K562 (cell line): ENCODE measurements at regions of chrX and their contacts with region 1.

Region 1: GRCh38 chrX:48972220-48973167 is 850 bp upstream of the KCND1 start:
- DNase-seq: peak; percentile 67 to 77 (median 74)
- ATAC-seq: peak; percentile 88
- H3K4me3 ChIP-seq: peak overlapping the region; percentile 7
- H3K27ac ChIP-seq: no peak overlapping the region; the same call in 2 of the 3 replicates
- H3K4me1 ChIP-seq: peaks cover 11 to 27% of the 10 kb centered on the region in 2 experiments; a peak in 4 of 5 replicates
- H3K27me3 ChIP-seq: no peaks in the 10 kb centered on the region
- CTCF ChIP-seq: peak; percentile 52 to 84 (median 59)
- EP300 ChIP-seq: no peak
- POLR2A ChIP-seq: no peak
- RAD21 ChIP-seq: peak; percentile 15 to 50; a peak in 2 of 4 replicates

Region 2: DNA sequence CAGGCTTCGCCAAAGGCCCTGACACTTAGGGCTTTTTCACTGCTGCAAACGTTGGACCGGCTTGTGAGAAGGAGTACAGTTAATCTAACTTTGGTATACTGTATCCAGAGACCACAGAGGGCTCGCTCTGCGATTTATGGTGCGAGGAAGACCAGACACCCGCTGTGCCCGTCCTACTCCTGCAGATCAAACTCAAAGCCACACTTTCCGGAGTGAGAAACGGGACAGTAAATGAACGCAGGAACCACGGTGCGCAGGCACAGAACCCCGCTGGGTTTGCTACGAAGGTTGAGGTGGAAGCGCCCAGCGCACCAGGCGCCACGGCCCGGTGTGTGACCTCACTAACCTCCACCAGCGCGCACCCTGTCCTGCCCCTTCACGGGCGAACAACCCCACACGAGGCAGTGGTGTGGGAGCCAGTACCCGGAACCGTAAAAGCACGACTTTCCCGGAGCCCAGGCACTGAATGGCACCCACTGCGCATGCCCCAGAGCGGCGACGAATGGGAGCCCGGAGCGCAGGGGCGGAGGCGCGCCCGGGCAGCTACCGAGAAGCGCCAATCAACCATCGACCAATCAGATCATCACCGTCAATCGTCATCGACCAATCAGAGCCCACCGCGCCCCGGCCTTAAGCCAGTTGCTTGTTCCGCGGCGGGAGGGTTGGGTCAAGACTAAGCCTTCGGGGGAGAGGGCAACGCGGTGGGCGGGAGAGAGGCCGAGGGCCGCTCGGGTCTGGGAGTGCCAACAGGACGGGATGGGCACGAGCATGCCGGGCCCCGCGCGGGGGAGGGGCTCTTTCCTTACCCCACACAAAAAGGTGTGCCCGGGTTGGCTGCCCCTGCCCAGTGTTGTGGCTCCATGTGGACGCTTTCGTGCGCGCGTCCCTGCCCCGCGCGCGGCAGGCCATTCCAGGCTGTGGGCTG is 128.5 kb after region 1 on chrX:
- CTCF ChIA-PET with region 1: no interaction called
- POLR2A ChIA-PET with region 1: no interaction called
- in situ Hi-C with region 1: loop called (anchors 10 kb)
- intact Hi-C with region 1: no loop called
- DNase-seq: peak; percentile 97 to 99 (median 98)
- ATAC-seq: peak; percentile 94
- H3K4me3 ChIP-seq: peak overlapping the region; percentile 58
- H3K27ac ChIP-seq: peak overlapping the region; percentile 97
- H3K4me1 ChIP-seq: peaks cover 6 to 14% of the 10 kb centered on the region in 2 experiments; a peak in 4 of 5 replicates
- H3K27me3 ChIP-seq: no peaks in the 10 kb centered on the region
- CTCF ChIP-seq: no peak
- EP300 ChIP-seq: no peak
- POLR2A ChIP-seq: peak; percentile 89
- RAD21 ChIP-seq: no peak

Region 3: DNA sequence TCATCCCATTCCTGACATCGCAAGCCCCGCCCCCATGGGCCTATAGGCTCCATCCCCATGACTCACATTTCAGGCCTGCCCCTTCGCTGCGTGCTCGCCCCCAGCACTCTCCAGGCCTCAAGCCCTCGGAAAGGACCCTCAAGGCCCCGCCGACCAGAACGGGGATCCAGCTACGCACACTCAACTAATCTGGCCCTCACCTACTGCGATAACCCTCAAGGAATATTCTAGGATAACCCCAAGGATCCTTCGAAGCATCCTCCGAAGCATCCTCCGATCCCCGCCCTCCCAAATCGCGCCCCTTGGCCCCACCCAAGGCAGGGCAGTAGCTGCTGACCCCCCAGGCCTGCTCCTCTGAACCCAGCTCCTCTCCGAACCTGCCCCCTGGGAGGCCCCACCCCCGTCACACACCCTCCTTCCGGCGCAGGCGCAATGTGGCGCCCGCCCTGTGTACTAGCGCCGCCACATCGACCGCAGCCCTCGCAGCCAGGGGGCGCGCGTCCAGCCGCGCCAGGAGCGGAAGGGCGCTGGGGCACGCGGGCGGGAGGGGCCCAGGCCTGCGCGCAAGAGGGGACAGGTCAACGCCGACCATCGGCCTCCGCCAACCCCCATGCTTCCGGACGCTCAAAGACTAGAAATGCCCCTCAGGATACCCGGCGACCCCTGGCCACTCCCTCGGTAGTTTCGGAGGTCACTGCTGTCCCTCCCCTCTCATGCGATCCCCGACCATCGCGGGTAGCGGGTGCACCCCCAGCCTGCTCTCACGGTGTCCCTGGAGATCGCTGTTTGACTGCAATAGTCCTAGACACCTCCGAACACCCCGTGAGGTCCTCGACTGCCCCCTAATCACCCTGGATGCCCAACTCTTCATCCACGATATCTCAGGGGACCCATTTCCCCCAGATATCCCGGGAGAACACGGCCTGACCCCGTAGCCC is 183.7 kb after region 1 on chrX:
- CTCF ChIA-PET with region 1: no interaction called
- POLR2A ChIA-PET with region 1: no interaction called
- in situ Hi-C with region 1: no loop called
- intact Hi-C with region 1: no loop called
- DNase-seq: peak; percentile 88 to 95 (median 90)
- ATAC-seq: peak; percentile 91
- H3K4me3 ChIP-seq: peak overlapping the region; percentile 44
- H3K27ac ChIP-seq: peak overlapping the region; percentile 91
- H3K4me1 ChIP-seq: peaks cover 0 to 28% of the 10 kb centered on the region in 2 experiments; a peak in 4 of 5 replicates
- H3K27me3 ChIP-seq: no peaks in the 10 kb centered on the region
- CTCF ChIP-seq: peak; percentile 75 to 95 (median 89)
- EP300 ChIP-seq: no peak
- POLR2A ChIP-seq: peak; percentile 75
- RAD21 ChIP-seq: peak; percentile 59 to 62